Activated T-helper 2 cell treated with anti-CD3 and anti-CD28 coated beads, Interferon-gamma antibody, Interleukin-2, Interleukin-4, amounts not matched to agents 10 μg/mL and 5 μg/mL and 100 μg/mL, durations not matched to agents 14 hours and 24 hours and 36 hours (primary cell): ENCODE measurements at regions of chr9 and their contacts with region 1.

Region 1: GRCh38 chr9:22211593-22212360 is 202.7 kb upstream of the CDKN2B start:
- DNase-seq: no peak
- H3K4me3 Mint-ChIP-seq: no peak overlapping the region
- H3K27ac Mint-ChIP-seq: no peak overlapping the region
- H3K4me1 Mint-ChIP-seq: peaks cover 48% of the 10 kb centered on the region
- H3K27me3 Mint-ChIP-seq: peaks cover 22% of the 10 kb centered on the region

Region 2: DNA sequence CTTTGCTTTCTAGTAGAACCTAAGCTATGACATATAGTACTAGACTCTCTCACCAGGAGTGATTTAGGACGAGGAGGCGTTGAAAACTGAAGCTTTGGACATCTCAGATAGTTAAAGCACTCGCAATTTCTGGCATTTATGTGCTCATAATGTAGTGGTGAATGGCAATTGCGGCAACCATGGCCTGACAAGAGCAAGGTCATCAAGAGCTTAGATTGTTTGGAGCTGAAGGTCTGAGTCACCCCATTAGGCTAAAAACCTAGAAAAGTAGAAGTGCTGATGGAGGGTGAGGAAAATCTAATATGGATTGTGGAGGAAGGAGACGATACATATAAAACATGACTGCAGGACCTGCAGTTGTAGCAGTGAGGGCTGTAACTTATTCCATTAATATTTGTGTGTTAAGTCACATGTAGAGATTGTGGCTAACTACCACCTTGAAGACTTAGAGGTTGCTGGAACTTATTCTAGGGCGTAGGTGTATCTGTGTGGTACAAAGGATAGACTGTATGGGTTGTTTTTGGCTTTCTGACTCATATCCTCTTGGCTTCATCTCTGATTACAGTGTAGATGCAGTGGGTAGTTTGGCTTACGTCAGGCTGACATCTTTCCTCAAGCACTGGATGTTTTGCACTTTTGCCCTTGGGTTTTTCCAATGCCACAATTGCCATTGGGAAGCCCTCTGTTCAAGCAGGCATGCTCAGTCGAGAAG is 63.8 kb before region 1 on chr9:
- intact Hi-C with region 1: loop called (anchors 1 kb)
- DNase-seq: peak; percentile 14
- H3K4me3 Mint-ChIP-seq: no peak overlapping the region
- H3K27ac Mint-ChIP-seq: peak overlapping the region; percentile 4
- H3K4me1 Mint-ChIP-seq: peaks cover 36% of the 10 kb centered on the region
- H3K27me3 Mint-ChIP-seq: peaks cover 26% of the 10 kb centered on the region

Region 3: GRCh38 chr9:22160221-22160620 is 51.6 kb before region 1 on chr9:
- intact Hi-C with region 1: loop called (anchors 5 kb)
- DNase-seq: no peak
- H3K4me3 Mint-ChIP-seq: no peak overlapping the region
- H3K27ac Mint-ChIP-seq: no peak overlapping the region
- H3K4me1 Mint-ChIP-seq: peaks cover 7% of the 10 kb centered on the region
- H3K27me3 Mint-ChIP-seq: peaks cover 37% of the 10 kb centered on the region

Region 4: DNA sequence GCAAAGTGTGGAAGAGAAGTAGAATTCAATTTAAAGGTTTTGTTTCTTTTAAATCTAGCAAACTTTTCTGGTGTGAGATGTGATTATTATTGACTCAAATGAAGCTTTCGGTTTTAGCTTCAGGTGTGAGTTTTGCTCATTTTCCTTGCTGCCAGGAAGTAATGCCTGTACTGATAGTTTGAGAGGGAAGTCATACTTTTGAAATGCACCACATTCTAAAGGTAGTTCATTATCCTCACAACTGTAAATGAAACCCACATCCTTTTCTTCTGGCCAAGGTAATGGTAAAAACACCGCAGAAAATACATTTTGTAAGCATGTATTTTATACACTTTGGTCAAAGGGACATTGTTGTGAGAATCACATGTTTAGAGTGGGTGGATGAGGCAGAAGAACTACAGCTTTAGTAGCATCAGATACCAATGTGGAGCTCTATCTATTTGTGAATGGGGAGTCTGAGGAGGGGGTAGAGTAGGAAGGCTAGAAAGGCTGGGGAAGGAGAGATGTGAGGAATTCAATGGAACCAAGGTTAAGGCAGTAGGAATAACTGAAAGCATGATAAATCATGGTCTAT is 35.7 kb before region 1 on chr9:
- intact Hi-C with region 1: loop called (anchors 1 kb)
- DNase-seq: no peak
- H3K4me3 Mint-ChIP-seq: no peak overlapping the region
- H3K27ac Mint-ChIP-seq: no peak overlapping the region
- H3K4me1 Mint-ChIP-seq: peaks cover 17% of the 10 kb centered on the region
- H3K27me3 Mint-ChIP-seq: peaks cover 18% of the 10 kb centered on the region

Region 5: DNA sequence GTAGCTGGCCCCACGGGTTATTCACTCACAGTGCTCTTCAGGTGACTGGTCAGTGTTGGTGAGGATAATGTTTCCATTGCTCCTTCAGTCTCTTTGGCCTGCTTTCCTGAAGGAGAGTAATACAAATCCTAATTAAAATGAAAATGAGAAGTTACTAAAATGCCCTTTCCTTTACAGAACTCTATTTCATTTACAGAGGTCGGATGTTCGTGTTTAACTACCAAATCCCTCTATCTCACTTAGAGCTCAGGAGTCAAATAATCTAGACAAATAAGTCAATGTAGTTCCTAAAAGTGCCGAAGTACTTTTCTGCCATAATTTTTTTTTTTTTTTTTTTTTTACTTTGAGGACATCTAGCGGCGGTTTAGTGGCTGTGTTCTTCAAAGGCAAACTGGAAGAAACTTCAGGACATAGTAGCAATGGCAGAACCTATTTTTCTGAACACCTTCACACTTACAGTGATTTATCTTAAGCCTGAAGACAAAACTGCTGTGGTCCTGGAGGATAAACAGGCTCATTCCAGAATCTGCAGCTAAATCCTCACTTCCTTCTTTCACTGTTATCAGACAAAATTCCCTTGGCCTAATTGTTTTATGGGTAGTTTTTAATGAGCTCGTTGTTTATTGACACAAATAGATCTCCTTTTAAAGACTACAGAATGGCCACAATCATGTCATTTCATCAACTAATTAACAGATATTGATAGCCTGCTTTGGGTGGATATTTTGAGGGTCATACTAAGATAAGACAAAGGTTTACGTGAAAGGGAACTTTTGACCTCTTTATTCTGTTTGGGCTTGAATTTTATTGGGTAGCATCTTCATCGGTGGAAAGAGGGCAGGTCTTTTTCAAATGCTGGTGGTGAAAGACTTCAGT is 27.3 kb after region 1 on chr9:
- intact Hi-C with region 1: loop called (anchors 1 kb)
- DNase-seq: no peak
- H3K4me3 Mint-ChIP-seq: no peak overlapping the region
- H3K27ac Mint-ChIP-seq: no peak overlapping the region
- H3K4me1 Mint-ChIP-seq: peaks cover 52% of the 10 kb centered on the region
- H3K27me3 Mint-ChIP-seq: peaks cover 41% of the 10 kb centered on the region